Vagina (tissue), 2 donors: ENCODE measurements at regions of chr19 and their contacts with region 1.

Region 1: DNA sequence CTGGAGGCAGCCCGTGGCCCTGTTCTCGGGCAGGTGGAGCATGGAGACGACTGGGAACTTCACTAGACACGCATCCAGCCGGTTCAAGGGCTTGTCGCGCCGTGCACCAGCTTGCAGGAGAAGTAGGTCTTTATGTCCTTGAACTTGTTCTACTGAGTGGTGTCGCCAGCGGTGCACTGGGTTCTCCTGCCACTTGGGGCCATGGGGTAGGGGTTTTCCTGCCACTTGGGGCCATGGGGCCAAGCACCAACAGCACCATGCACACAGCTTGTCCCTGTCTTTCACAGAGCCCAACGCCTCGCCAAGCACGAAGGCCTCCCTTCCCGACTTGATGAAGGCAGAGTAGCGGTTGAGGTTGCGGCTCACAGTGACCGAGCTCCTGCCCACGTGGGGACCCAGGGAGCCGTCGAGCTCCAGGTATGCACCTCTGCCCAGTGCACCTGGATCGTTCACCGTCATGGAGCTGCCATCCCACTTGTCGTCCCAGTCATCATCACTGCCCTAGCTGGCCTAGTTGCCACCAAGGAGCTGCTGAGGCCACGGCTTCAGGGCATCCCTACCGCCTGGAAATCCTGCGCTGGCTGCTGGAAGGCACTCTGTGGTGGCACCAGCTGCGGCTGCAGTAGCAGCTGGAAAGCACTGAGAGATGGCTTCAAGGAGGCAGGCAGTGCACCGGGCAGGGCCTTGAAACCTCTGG is 40.5 kb upstream of the TPM4 start:
- DNase-seq: no peak
- H3K4me3 ChIP-seq: no peak overlapping the region
- H3K27ac ChIP-seq: no peak overlapping the region
- H3K4me1 ChIP-seq: no peaks in the 10 kb centered on the region
- H3K27me3 ChIP-seq: no peaks in the 10 kb centered on the region
- CTCF ChIP-seq: no peak
- POLR2A ChIP-seq: no peak

Region 2: DNA sequence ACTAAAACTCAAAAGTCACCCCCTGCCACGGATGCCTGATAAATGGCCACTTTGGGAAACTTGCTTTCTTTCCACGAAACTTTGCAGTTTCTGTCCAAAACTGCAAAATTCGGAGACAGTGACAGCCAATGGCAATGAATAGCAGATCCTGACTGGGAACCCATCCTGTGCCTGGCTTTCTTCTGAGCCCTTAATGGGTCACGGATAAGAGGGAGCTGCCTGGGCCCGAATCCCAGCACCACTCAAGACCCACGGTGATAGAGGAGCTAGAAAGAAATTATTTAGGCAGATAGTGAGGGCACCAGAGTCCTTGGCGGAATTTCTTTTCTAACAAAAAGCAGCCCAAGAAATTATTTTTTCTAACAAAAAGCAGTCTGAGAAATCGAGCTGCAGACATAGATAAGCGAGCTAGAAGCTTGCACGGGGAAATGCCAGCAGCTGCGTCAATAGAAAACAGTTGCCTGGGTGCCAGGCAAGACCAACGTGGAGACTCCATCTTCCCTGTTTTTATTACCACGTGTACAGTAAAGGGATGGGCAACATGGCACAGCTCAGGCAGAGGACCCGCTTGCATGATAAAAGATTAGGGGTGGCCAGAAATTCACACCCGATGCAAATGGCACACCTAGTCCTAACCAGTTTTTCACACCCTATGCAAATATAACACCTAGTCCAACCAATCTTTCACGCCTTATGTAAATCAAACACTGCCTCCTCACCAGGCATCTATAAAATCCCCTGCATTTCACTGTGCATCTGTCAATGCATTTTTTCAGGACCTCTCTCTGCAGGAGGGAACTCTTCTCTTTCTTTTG is 100.6 kb after region 1 on chr19:
- intact Hi-C with region 1: no loop called
- DNase-seq: no peak
- H3K4me3 ChIP-seq: no peak overlapping the region
- H3K27ac ChIP-seq: no peak overlapping the region
- H3K4me1 ChIP-seq: no peaks in the 10 kb centered on the region
- H3K27me3 ChIP-seq: no peaks in the 10 kb centered on the region
- CTCF ChIP-seq: no peak
- POLR2A ChIP-seq: no peak

Region 3: DNA sequence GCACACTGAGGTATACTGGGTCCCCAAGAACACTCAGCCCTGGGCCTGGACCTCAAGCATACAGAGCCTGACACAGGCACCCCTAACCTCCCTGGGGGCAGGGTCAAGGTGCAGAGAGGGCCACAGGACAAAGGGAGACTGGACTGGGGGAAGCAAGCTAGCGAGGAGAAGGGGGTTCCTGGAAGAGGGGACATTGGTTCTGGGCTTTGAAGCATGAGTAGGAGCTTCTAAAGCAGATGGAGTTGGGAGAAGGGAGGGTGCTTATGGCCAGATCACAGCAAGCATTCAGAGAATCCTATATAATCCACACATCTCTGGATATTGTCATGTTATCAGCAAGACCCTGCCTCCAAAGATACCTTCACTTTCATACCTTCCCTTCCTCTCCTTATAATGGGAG is 134.4 kb after region 1 on chr19:
- intact Hi-C with region 1: no loop called
- DNase-seq: no peak
- H3K4me3 ChIP-seq: no peak overlapping the region
- H3K27ac ChIP-seq: no peak overlapping the region
- H3K4me1 ChIP-seq: no peaks in the 10 kb centered on the region
- H3K27me3 ChIP-seq: no peaks in the 10 kb centered on the region
- CTCF ChIP-seq: no peak
- POLR2A ChIP-seq: no peak

Region 4: DNA sequence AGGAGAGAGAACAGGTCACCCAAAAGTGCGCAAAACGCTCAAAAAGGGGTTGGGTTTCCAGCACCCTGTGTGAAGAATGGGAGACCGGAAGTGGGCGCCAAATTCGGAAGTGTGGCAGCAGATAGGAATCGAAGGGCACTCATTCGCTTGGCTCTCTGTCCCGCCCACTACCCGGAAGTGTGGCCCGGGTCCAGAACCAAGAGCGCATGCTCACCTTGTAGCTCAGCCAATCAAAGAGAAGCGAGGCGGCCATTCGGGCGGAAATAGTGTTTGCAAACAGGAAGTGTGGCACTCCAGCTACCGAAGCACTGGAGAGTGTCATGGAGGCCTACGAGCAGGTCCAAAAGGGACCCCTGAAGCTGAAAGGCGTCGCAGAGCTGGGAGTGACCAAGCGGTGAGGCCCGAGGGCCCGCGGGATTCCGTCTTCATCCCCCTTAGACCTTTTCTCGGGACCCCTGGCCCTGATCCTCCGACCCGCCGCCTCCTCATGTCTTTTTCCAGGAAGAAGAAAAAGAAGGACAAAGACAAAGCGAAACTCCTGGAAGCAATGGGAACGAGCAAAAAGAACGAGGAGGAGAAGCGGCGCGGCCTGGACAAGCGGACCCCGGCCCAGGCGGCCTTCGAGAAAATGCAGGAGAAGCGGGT is 149.5 kb after region 1 on chr19 and contains the start of gene FAM32A:
- intact Hi-C with region 1: loop called (anchors 5 kb)
- DNase-seq: peak in 1 of 2 donors; percentile 99
- H3K4me3 ChIP-seq: peak within 1 kb of the TSS; percentile 67 to 84
- H3K27ac ChIP-seq: peak within 1 kb of the TSS; percentile 72
- H3K4me1 ChIP-seq: peaks cover 35% of the 10 kb centered on the region
- H3K27me3 ChIP-seq: no peaks in the 10 kb centered on the region
- CTCF ChIP-seq: peak in 1 of 3 experiments; percentile 13
- POLR2A ChIP-seq: peak in 1 of 2 donors; percentile 63
- total RNA-seq, gene FAM32A: 57.2 TPM

Region 5: GRCh38 chr19:16355293-16356043 is 319.7 kb after region 1 on chr19:
- intact Hi-C with region 1: no loop called
- DNase-seq: no peak
- H3K4me3 ChIP-seq: peak overlapping the region; percentile 6 to 20
- H3K27ac ChIP-seq: no peak overlapping the region
- H3K4me1 ChIP-seq: peaks cover 11% of the 10 kb centered on the region
- H3K27me3 ChIP-seq: no peaks in the 10 kb centered on the region
- CTCF ChIP-seq: no peak
- POLR2A ChIP-seq: no peak

Region 6: GRCh38 chr19:16417660-16418596 is 382.2 kb after region 1 on chr19:
- intact Hi-C with region 1: no loop called
- DNase-seq: no peak
- H3K4me3 ChIP-seq: no peak overlapping the region
- H3K27ac ChIP-seq: no peak overlapping the region
- H3K4me1 ChIP-seq: peaks cover 10% of the 10 kb centered on the region
- H3K27me3 ChIP-seq: no peaks in the 10 kb centered on the region
- CTCF ChIP-seq: peak; percentile 52 to 72 (median 62)
- POLR2A ChIP-seq: no peak